Mammary epithelial cell (primary cell): ENCODE measurements at regions of chr12 and their contacts with region 1.

Region 1: DNA sequence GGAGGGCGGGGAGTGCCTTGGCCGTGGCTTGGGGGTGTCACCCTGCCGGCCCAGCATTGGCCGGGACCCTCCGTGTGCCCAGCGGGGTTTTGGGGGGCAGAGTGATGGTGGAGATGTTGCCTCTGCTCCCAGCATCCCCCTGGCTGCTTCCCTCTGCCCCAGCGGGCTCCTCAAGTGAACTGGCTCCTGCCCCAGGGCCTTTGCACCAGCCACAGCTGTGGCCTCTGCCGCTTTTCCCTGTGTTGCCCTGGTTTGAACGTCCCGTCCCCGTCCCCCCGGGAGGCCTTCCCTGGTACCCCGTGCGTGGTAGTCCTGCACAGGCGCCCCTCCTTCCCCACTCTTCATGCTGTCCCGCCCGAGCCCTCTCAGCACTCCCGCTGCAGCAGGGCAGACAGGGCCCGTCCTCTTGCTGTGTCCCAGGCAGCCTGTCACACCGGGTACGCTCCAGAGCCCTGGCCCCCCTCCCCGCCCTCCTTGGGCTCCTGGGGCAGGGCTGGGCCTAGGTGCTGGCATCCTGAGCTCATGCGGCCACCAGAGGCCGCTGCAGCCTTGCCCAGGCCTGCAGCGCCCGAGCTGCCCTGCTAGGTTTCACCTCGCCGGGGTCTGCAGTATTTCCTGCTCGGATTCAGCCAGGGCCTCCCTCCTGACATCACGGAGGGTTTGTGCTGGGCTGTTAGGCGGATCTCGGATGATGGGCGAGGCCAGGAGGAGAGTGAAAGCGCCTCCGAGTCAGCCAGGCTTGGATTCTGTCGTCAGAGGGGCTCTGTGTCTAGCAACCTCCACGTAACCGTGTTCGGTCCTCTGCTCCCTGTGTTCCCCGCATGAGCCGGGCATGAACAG is 9.5 kb downstream of the NOC4L start:
- DNase-seq: peak; percentile 39
- H3K4me3 ChIP-seq: no peak overlapping the region
- H3K27ac ChIP-seq: no peak overlapping the region
- H3K4me1 ChIP-seq: peaks cover under 1% of the 10 kb centered on the region
- H3K27me3 ChIP-seq: no peaks in the 10 kb centered on the region
- CTCF ChIP-seq: peak; percentile 85 to 98

Region 2: DNA sequence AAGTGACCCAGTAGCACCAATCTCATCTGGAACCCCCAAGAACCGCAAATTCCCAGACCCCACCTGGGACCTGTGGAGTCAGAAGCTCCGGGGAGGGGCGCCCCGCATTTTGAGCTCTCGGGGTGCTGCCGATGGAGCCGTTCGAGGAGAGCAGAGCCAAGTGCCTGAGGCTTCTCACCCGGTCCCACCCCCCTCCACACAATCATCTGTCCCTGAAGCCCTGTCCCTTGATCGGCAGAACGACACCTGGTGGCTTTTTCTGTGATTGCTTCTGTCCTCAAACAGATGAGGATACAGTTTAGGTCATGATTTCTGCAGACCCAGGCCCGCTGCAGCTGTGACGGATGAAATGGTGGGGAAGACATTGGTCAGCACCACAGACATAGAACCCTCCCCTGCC is 65.2 kb after region 1 on chr12:
- CTCF ChIA-PET with region 1: no interaction called
- dilution Hi-C with region 1: no loop called
- in situ Hi-C with region 1: no loop called
- intact Hi-C with region 1: loop called (anchors 1 kb)
- DNase-seq: no peak
- H3K4me3 ChIP-seq: no peak overlapping the region
- H3K27ac ChIP-seq: no peak overlapping the region
- H3K4me1 ChIP-seq: no peaks in the 10 kb centered on the region
- H3K27me3 ChIP-seq: no peaks in the 10 kb centered on the region
- CTCF ChIP-seq: peak in 1 of 2 donors; percentile 25

Region 3: DNA sequence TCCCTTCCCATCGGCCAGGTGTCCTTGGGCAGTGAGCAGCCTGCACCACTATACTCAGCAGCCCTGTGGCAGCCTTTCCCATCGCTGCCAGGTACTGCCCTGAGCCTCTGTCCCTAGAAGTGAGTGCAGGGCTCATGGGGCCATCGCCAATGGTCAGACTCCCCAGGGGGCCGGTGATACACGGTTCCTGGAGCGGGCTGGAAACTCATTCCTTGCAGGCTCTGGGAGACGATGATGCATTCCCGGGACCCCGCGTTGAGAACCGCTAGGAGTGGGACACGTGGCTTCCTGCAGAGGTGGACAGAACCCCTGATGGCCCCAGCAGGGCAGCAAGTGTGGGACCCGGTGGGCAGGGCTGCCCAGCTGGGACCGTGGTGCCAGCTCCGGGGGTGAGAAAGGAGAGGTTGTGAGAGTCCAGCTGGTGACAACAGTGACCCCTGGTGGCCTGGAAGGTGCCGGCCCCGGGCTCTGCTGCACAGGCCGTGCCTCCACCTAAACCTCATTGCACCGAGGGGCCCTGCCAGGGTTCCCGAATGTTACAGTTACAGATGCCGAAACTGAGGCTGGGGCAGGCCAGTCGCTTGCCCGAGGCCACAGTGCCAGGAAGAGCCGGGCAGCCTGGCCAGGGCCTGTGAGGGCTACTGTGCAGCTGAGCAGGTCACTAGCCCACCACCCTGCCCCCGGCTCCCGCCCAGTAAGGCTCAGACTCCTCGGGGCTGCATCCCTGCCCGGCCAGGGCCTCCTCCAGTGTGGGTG is 370.0 kb after region 1 on chr12:
- CTCF ChIA-PET with region 1: no interaction called
- dilution Hi-C with region 1: no loop called
- in situ Hi-C with region 1: no loop called
- intact Hi-C with region 1: loop called (anchors 5 kb)
- DNase-seq: peak; percentile 14
- H3K4me3 ChIP-seq: no peak overlapping the region
- H3K27ac ChIP-seq: no peak overlapping the region
- H3K4me1 ChIP-seq: peaks cover 23% of the 10 kb centered on the region
- H3K27me3 ChIP-seq: no peaks in the 10 kb centered on the region
- CTCF ChIP-seq: peak; percentile 50 to 66

Region 4: GRCh38 chr12:132638541-132639418 is 485.1 kb after region 1 on chr12:
- CTCF ChIA-PET with region 1: no interaction called
- dilution Hi-C with region 1: no loop called
- in situ Hi-C with region 1: no loop called
- intact Hi-C with region 1: loop called (anchors 5 kb)
- DNase-seq: peak; percentile 26
- H3K4me3 ChIP-seq: no peak overlapping the region
- H3K27ac ChIP-seq: no peak overlapping the region
- H3K4me1 ChIP-seq: no peaks in the 10 kb centered on the region
- H3K27me3 ChIP-seq: no peaks in the 10 kb centered on the region
- CTCF ChIP-seq: peak; percentile 88 to 89